ENCODE measurements at regions of chr7 and their contacts with region 1.

Region 1: GRCh38 chr7:7103343-7104313 is 78.7 kb upstream of the C1GALT1 start:
- DNase-seq: peak in 4 of 42 donors; percentile 3 to 34 (median 20)

Region 2: GRCh38 chr7:7424151-7424873 is 320.7 kb after region 1 on chr7:
- intact Hi-C with region 1: loop called (anchors 10 kb)
- DNase-seq: peak; percentile 11 to 89 (median 66)

Measured in head of caudate nucleus (tissue), 42 donors.